Caco-2 (cell line): ENCODE measurements at regions of chr7 and their contacts with region 1.

Region 1: DNA sequence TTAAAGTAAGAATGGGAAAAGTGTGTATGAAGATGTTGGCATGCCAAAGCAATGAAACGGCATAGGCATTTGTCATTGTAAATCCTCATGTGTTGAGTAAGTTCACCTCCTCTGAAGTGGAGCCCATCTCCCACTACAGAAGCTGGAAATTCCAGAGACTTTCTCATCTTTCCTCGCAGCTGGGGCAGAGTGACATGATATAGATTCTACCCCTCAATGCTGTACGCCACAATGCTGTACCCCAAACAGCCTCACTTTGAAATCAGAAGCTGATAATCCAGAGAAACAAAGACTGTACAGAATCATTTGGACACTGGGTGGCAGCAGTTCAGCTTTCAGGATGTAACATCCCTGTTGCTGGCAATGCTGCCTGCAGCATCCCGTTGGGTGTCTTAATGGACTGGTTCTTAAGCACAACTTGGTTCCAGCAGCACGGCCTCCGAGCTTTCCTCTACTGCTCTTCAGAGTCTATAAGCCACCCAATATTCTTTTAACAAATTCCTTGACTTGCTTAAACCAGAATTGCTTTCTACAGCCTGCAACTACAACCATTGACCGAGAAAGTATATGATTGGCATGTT is 18.8 kb downstream of the ZC3HAV1L start:
- DNase-seq: peak; percentile 71 to 74
- H3K4me3 ChIP-seq: no peak overlapping the region
- H3K4me3 Mint-ChIP-seq: no peak overlapping the region
- H3K27ac Mint-ChIP-seq: no peak overlapping the region
- H3K4me1 ChIP-seq: 0 out of 2 replicates have a peak, but pooled peaks cover 2% of the 10 kb centered on the region
- H3K4me1 Mint-ChIP-seq: peaks cover 7% of the 10 kb centered on the region
- H3K27me3 ChIP-seq: no peaks in the 10 kb centered on the region
- H3K27me3 Mint-ChIP-seq: no peaks in the 10 kb centered on the region
- CTCF ChIP-seq: peak; percentile 55 to 75

Region 2: GRCh38 chr7:139035586-139036353 is 18.7 kb after region 1 on chr7 and contains the start of gene ZC3HAV1L:
- CTCF ChIA-PET with region 1: no interaction called
- POLR2A ChIA-PET with region 1: no interaction called
- intact Hi-C with region 1: loop called (anchors 2 kb)
- DNase-seq: peak; percentile 79 to 84
- H3K4me3 ChIP-seq: peak within 1 kb of the TSS; percentile 97
- H3K4me3 Mint-ChIP-seq: peak within 1 kb of the TSS; percentile 77
- H3K27ac Mint-ChIP-seq: peak within 1 kb of the TSS; percentile 51
- H3K4me1 ChIP-seq: peaks cover 6% of the 10 kb centered on the region
- H3K4me1 Mint-ChIP-seq: peaks cover 20% of the 10 kb centered on the region
- H3K27me3 ChIP-seq: no peaks in the 10 kb centered on the region
- H3K27me3 Mint-ChIP-seq: no peaks in the 10 kb centered on the region
- CTCF ChIP-seq: no peak
- total RNA-seq, gene ZC3HAV1L: 22.1 and 24.6 TPM in 2 replicates

Region 3: DNA sequence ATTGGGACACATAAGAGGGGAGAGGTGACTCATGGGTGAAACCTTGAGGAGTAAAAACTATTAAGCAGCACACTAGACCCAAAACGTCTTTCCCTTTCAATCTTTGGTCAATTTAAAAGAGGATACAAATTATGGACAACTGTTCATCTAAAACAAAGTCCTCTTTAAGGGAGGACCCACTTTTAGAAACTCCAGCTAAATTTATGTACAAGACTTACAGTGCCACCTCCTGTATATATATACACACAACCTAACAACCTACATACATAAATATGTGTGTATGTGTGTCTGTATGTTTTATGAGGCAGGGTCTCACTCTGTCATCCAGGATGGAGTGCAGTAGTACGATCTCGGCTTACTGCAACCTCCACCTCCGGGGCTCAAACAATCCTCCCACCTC is 110.6 kb after region 1 on chr7:
- CTCF ChIA-PET with region 1: no interaction called
- POLR2A ChIA-PET with region 1: no interaction called
- intact Hi-C with region 1: loop called (anchors 5 kb)
- DNase-seq: no peak
- H3K4me3 ChIP-seq: no peak overlapping the region
- H3K4me3 Mint-ChIP-seq: no peak overlapping the region
- H3K27ac Mint-ChIP-seq: no peak overlapping the region
- H3K4me1 ChIP-seq: no peaks in the 10 kb centered on the region
- H3K4me1 Mint-ChIP-seq: peaks cover 4% of the 10 kb centered on the region
- H3K27me3 ChIP-seq: no peaks in the 10 kb centered on the region
- H3K27me3 Mint-ChIP-seq: no peaks in the 10 kb centered on the region
- CTCF ChIP-seq: no peak